ENCODE measurements at regions of chr19 and their contacts with region 1.

Region 1: GRCh38 chr19:2427429-2428320 is at the start of gene TIMM13:
- DNase-seq: peak; percentile 96 to 99 (median 98)
- ATAC-seq: peak; percentile 96
- H3K4me3 ChIP-seq: peak within 1 kb of the TSS; percentile 97
- H3K4me3 Mint-ChIP-seq: peak within 1 kb of the TSS; percentile 89 to 98 (median 95)
- H3K27ac ChIP-seq: peak within 1 kb of the TSS; percentile 91
- H3K27ac Mint-ChIP-seq: peak within 1 kb of the TSS; percentile 93 to 99 (median 97)
- H3K4me1 ChIP-seq: peaks cover 11 to 16% of the 10 kb centered on the region in 2 donors
- H3K4me1 Mint-ChIP-seq: peaks cover 0 to 16% (median 14%) of the 10 kb centered on the region in 7 donors
- H3K27me3 ChIP-seq: no peaks in the 10 kb centered on the region
- H3K27me3 Mint-ChIP-seq: peaks cover 0 to 2% (median 0%) of the 10 kb centered on the region in 5 donors
- total RNA-seq, gene TIMM13: 31.3 to 70.8 (median 35.4) TPM

Region 2: DNA sequence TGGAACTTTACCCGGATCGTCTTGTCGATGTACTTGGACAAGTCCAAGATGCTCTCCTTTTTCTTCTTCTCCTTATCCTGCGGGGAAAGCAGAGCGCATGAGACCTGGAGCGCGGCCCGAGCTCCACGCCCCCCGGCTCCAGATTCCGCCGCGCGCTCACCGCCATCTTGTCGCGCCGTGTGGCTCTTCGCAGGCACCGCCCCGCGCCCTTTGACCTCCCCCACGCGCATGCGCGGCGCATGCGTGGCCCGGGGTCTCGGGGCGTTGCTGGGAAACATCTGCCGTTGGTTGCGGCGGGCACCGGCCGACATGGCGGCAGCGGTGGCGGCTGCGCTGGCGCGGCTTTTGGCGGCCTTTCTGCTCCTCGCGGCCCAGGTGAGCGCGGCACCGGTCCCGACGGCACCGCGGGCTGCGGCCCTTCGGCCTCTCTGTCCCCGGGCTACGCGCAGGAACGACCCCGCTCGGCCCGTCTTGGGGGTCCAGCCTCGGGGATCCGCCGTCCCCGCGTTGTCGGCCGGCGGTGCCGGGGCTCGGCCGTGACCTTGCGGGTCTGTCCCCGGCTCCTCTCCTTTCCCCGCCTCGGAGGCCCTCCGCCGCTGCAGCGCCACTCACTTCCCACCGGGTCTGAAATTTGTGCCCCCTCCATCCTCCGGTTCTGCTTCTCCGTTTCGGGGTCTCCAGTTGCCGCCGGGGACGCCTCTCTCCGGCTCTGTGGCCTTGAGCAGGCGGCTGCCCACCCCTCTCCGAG is 99.1 kb before region 1 on chr19 and contains the starts of genes LSM7 and SPPL2B:
- CTCF ChIA-PET with region 1: no interaction called
- POLR2A ChIA-PET with region 1: interaction called, 4 read pairs
- intact Hi-C with region 1: loop called in 1 of 2 experiments (anchors 1 kb)
- DNase-seq: peak; percentile 87 to 95 (median 91)
- ATAC-seq: peak; percentile 85
- H3K4me3 ChIP-seq: peak within 1 kb of the TSS; percentile 95
- H3K4me3 Mint-ChIP-seq: peak within 1 kb of the TSS; percentile 94 to 100 (median 98)
- H3K27ac ChIP-seq: peak within 1 kb of the TSS; percentile 93
- H3K27ac Mint-ChIP-seq: peak within 1 kb of the TSS; percentile 91 to 100 (median 99)
- H3K4me1 ChIP-seq: peaks cover 10 to 48% of the 10 kb centered on the region in 2 donors
- H3K4me1 Mint-ChIP-seq: peaks cover 35 to 80% (median 62%) of the 10 kb centered on the region in 7 donors
- H3K27me3 ChIP-seq: no peaks in the 10 kb centered on the region
- H3K27me3 Mint-ChIP-seq: peaks cover 0 to 2% (median 0%) of the 10 kb centered on the region in 5 donors
- total RNA-seq, gene LSM7: 79.4 to 131 (median 102) TPM
- total RNA-seq, gene SPPL2B: 92.2 to 150 (median 140) TPM

Region 3: GRCh38 chr19:2345794-2346663 is 81.6 kb before region 1 on chr19:
- CTCF ChIA-PET with region 1: no interaction called
- POLR2A ChIA-PET with region 1: no interaction called
- intact Hi-C with region 1: no loop called
- DNase-seq: no peak
- ATAC-seq: no peak
- H3K4me3 ChIP-seq: no peak overlapping the region
- H3K4me3 Mint-ChIP-seq: no peak overlapping the region
- H3K27ac ChIP-seq: no peak overlapping the region
- H3K27ac Mint-ChIP-seq: peak overlapping the region in 3 of 9 donors; percentile 29 to 67 (median 38)
- H3K4me1 ChIP-seq: no peaks in the 10 kb centered on the region
- H3K4me1 Mint-ChIP-seq: peaks cover 0 to 2% (median 0%) of the 10 kb centered on the region in 7 donors
- H3K27me3 ChIP-seq: no peaks in the 10 kb centered on the region
- H3K27me3 Mint-ChIP-seq: no peaks in the 10 kb centered on the region

Region 4: DNA sequence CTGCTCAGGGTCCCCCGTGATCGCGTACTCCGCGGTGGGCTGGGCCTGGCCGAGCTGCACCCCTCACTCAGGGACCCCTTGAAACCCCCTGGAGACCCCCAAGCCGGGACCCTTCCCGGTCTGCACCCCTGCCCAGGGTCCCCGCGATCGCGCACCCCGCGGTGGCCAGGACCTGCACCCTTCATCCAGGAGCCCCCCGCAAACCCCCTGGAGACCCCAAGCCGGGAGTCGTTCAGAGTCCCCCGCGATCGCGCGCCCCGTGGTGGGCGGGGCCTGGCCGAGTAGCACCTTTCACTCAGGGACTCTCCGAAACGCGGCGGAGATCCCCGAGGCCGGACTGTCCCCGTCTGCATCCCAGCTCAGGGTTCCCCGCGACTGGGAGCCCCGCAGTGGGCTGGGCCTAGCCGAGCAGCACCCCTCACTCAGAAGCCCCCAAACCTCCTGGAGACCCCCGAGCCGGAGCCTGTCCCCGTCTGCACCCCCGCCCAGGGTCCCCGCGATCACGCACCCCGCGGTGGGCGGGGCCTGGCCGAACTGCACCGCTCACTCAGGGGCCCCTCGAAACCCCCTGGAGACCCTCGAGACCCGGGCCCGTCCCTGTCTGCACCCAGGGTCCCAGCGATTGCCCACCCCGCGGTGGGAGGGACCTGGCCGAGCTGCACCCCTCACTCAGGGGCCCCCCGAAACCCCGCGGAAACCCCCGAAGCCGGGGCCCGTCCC is 28.3 kb after region 1 on chr19:
- CTCF ChIA-PET with region 1: interaction called, 3 read pairs
- POLR2A ChIA-PET with region 1: interaction called, 23 read pairs
- intact Hi-C with region 1: loop called (anchors 1 kb)
- DNase-seq: peak in 5 of 9 donors; percentile 14 to 68 (median 29)
- ATAC-seq: peak; percentile 59
- H3K4me3 ChIP-seq: peak overlapping the region; percentile 79
- H3K4me3 Mint-ChIP-seq: peak overlapping the region; percentile 77 to 90 (median 84)
- H3K27ac ChIP-seq: peak overlapping the region; percentile 86
- H3K27ac Mint-ChIP-seq: peak overlapping the region in 6 of 9 donors; percentile 77 to 88 (median 82)
- H3K4me1 ChIP-seq: peaks cover 14 to 18% of the 10 kb centered on the region in 2 donors
- H3K4me1 Mint-ChIP-seq: peaks cover 14 to 28% (median 18%) of the 10 kb centered on the region in 7 donors
- H3K27me3 ChIP-seq: no peaks in the 10 kb centered on the region
- H3K27me3 Mint-ChIP-seq: no peaks in the 10 kb centered on the region

Region 5: DNA sequence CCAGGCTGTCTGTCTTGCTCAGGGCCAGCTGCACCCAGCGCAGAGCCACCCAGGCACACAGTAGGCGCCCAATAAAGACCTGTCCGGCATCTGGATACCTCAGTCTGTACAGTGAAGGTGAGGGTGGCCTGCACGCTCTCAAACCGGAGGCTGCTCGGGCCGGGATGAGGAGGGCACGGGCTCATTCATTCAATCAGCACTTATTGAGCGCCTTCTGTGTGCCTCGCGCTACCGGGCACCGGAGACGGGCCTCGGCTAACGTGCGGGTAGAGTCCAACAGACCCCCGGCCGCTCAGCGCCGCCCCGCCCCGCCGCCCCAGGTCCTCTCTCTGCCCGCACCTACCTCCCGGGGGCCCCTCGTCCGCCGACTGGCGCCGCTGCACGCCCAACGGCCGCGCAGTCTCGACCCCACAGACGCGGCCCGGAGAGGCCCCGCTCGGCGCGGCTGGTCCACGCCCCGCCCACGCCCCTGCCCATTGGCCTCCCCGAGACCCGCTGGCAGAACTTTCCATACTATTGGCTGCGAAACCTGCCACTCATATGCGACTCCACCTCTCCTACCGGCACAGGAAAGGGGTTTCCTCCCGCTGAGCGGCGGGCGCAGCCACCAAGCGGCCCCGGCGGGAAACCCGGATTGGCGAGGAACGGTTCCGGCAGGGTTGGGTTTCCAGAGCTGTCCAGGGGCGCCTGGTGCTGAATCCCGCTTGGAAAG is 312.1 kb after region 1 on chr19 and contains the start of gene SLC39A3:
- CTCF ChIA-PET with region 1: no interaction called
- POLR2A ChIA-PET with region 1: no interaction called
- intact Hi-C with region 1: loop called in 1 of 2 experiments (anchors 1 kb)
- DNase-seq: peak; percentile 94 to 99 (median 98)
- ATAC-seq: peak; percentile 100
- H3K4me3 ChIP-seq: peak within 1 kb of the TSS; percentile 72
- H3K4me3 Mint-ChIP-seq: peak within 1 kb of the TSS; percentile 80 to 90 (median 86)
- H3K27ac ChIP-seq: peak within 1 kb of the TSS; percentile 82
- H3K27ac Mint-ChIP-seq: peak within 1 kb of the TSS in 8 of 9 donors; percentile 36 to 87 (median 72)
- H3K4me1 ChIP-seq: peaks cover 7 to 8% of the 10 kb centered on the region in 2 donors
- H3K4me1 Mint-ChIP-seq: peaks cover 8 to 29% (median 24%) of the 10 kb centered on the region in 7 donors
- H3K27me3 ChIP-seq: no peaks in the 10 kb centered on the region
- H3K27me3 Mint-ChIP-seq: peaks cover 6 to 18% (median 14%) of the 10 kb centered on the region in 5 donors
- total RNA-seq, gene SLC39A3: 10.1 to 28.5 (median 17.8) TPM